ENCODE measurements at regions of chr4 and their contacts with region 1.

Region 1: GRCh38 chr4:143482840-143483239 is 30.7 kb upstream of the SMARCA5 start:
- DNase-seq: no peak
- ATAC-seq: peak; percentile 63 to 81 (median 76)
- H3K4me3 ChIP-seq: no peak overlapping the region
- H3K27ac ChIP-seq: no peak overlapping the region
- H3K4me1 ChIP-seq: no peaks in the 10 kb centered on the region
- H3K27me3 ChIP-seq: no peaks in the 10 kb centered on the region
- CTCF ChIP-seq: peak; percentile 51 to 77 (median 66)
- POLR2A ChIP-seq: no peak

Region 2: DNA sequence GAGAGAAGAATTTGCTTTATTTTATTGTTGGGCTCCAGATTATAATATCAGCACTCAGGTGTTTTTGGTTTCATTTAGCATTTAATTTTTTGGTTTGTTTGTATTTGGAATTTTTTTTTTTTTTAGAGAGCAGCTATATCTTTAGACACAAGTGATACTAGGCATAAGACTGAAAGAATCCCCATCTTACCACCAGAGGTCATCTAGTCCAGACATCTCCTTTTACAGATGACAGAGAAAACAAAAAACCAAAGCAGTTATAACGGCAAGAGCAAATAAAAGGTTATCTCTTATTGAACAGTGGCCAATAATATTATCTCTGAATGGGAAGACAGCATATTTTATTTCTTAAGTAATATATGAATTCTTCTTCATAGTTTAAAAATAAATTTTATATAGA is 275.3 kb before region 1 on chr4:
- intact Hi-C with region 1: loop called (anchors 5 to 10 kb)
- DNase-seq: no peak
- ATAC-seq: peak in 1 of 4 donors; percentile 41
- H3K4me3 ChIP-seq: no peak overlapping the region
- H3K27ac ChIP-seq: no peak overlapping the region
- H3K4me1 ChIP-seq: no peaks in the 10 kb centered on the region
- H3K27me3 ChIP-seq: no peaks in the 10 kb centered on the region
- CTCF ChIP-seq: peak; percentile 14 to 36 (median 24)
- POLR2A ChIP-seq: no peak

Region 3: DNA sequence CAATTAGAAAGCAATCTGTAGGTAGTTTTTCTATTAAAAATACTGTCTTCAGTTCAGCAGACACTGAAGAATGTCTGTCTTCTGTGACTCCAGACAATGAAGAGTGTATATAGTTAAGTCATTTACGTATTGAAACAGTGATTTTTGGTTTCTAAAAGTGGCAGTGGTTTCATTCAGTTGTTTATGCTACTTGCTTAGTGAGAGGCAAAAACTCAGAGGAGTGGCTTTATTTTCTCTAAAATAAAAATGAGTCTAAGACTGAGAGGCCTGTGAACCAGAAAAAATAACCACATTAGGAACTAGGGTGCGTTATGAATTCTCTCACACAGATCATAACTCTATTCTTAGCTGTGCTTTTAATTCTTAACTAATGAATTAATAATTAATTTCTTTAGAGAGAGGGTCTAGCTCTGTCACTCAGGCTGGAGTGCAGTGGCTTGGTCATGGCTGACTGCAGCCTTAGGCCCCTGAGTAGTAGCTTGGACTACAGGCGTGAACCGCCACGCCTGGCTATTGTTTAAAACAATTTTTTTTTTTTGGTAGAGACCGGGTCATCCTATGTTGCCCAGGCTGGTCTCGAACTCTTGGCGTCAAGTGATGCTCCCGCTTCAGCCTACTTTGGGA is 186.2 kb after region 1 on chr4:
- intact Hi-C with region 1: no loop called
- DNase-seq: no peak
- ATAC-seq: no peak
- H3K4me3 ChIP-seq: no peak overlapping the region
- H3K27ac ChIP-seq: no peak overlapping the region
- H3K4me1 ChIP-seq: no peaks in the 10 kb centered on the region
- H3K27me3 ChIP-seq: no peaks in the 10 kb centered on the region
- CTCF ChIP-seq: no peak
- POLR2A ChIP-seq: no peak